ENCODE measurements at regions of chr21 and their contacts with region 1.

Region 1: DNA sequence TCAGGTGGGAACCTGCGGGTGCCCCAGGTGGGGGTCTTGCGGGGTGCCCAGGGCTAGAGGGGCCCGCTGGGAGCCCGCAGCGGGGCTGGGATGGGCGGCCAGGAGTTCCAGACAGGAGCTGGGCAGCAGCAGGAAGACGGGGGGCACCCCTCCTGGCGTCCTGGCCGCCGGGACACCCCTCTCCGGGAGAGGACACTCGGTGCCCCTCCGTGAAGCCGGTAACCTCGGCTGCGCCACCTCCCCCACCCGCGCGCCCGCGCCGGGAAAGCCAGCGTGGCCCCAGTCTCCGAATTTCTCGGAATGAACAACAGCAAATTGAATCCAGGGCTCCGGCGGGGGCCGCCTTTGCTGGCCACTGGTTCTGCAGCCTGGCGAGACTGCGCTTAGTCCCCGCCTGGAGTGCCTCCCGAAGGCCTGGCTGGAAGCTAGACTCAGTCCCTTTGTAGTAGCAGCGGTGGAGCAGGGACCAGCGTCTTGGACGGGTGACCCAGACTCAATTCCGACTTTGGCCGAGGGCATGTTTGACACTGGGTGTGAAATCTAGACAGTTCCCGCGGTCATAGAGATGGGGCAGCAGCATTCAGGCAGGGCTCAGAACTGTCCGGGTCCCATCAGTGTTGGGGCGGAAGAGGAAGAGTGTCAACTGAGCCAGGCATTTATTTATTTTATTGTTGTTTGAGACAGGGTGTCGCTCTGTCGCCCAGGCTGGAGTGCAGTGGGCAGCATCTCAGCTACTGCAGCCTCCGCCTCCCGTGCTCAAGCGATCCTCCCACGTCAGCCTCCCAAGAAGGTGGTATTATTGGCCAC is 769 bp downstream of the IFNGR2 start:
- DNase-seq: peak in 2 of 5 donors; percentile 17 to 20
- H3K4me3 ChIP-seq: peak overlapping the region; percentile 54 to 78
- H3K4me3 Mint-ChIP-seq: peak overlapping the region; percentile 93 to 98 (median 96)
- H3K27ac ChIP-seq: peak overlapping the region; percentile 58
- H3K27ac Mint-ChIP-seq: peak overlapping the region; percentile 83 to 98 (median 91)
- H3K4me1 ChIP-seq: peaks cover 31% of the 10 kb centered on the region
- H3K4me1 Mint-ChIP-seq: peaks cover 21 to 43% (median 33%) of the 10 kb centered on the region in 4 donors
- H3K27me3 ChIP-seq: no peaks in the 10 kb centered on the region
- H3K27me3 Mint-ChIP-seq: peaks cover 0 to 2% of the 10 kb centered on the region in 2 donors

Region 2: GRCh38 chr21:33380483-33380998 is 23.4 kb before region 1 on chr21:
- CTCF ChIA-PET with region 1: interaction called, 4 read pairs
- POLR2A ChIA-PET with region 1: interaction called, 11 read pairs
- intact Hi-C with region 1: loop called (anchors 2 kb)
- DNase-seq: peak; percentile 68 to 93 (median 72)
- H3K4me3 ChIP-seq: no peak overlapping the region
- H3K4me3 Mint-ChIP-seq: peak overlapping the region in 7 of 8 donors; percentile 44 to 81 (median 66)
- H3K27ac ChIP-seq: peak overlapping the region; percentile 44
- H3K27ac Mint-ChIP-seq: peak overlapping the region; percentile 87 to 96 (median 91)
- H3K4me1 ChIP-seq: peaks cover 64% of the 10 kb centered on the region
- H3K4me1 Mint-ChIP-seq: peaks cover 45 to 74% (median 58%) of the 10 kb centered on the region in 4 donors
- H3K27me3 ChIP-seq: no peaks in the 10 kb centered on the region
- H3K27me3 Mint-ChIP-seq: no peaks in the 10 kb centered on the region

Region 3: GRCh38 chr21:33386222-33386784 is 17.7 kb before region 1 on chr21:
- CTCF ChIA-PET with region 1: interaction called, 3 read pairs
- POLR2A ChIA-PET with region 1: interaction called, 11 read pairs
- intact Hi-C with region 1: loop called (anchors 2 kb)
- DNase-seq: no peak
- H3K4me3 ChIP-seq: no peak overlapping the region
- H3K4me3 Mint-ChIP-seq: no peak overlapping the region
- H3K27ac ChIP-seq: no peak overlapping the region
- H3K27ac Mint-ChIP-seq: no peak overlapping the region
- H3K4me1 ChIP-seq: peaks cover 44% of the 10 kb centered on the region
- H3K4me1 Mint-ChIP-seq: peaks cover 33 to 50% (median 43%) of the 10 kb centered on the region in 4 donors
- H3K27me3 ChIP-seq: no peaks in the 10 kb centered on the region
- H3K27me3 Mint-ChIP-seq: peaks cover 0 to 3% of the 10 kb centered on the region in 2 donors

Measured in CD4-positive, alpha-beta memory T cell (primary cell).